ENCODE measurements at regions of chr17 and their contacts with region 1.

Region 1: DNA sequence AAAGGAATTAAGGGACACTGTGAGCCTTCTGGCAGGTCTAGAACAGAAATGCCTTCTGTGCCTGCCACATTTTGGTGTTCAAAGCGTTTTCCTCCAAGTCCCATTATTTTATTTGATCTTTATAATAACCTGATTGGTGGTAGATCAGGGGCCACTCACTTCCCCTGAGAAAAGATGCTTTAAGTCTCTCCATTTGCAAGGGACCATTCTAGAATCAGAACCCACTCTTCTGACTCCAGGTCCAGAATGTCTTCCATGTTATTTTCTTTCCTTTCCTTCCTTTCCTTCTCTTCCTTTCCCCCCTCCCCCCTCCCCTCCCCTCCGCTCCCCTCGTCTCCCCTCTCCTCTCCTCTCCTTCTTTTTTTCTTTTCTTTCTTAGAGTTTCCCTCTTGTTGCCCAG is 19.3 kb upstream of the CDC42EP4 start:
- DNase-seq: no peak
- H3K4me3 ChIP-seq: no peak overlapping the region
- H3K27ac ChIP-seq: no peak overlapping the region
- H3K4me1 ChIP-seq: peaks cover 5 to 8% of the 10 kb centered on the region in 2 donors
- H3K27me3 ChIP-seq: no peaks in the 10 kb centered on the region
- CTCF ChIP-seq: no peak
- POLR2A ChIP-seq: no peak

Region 2: DNA sequence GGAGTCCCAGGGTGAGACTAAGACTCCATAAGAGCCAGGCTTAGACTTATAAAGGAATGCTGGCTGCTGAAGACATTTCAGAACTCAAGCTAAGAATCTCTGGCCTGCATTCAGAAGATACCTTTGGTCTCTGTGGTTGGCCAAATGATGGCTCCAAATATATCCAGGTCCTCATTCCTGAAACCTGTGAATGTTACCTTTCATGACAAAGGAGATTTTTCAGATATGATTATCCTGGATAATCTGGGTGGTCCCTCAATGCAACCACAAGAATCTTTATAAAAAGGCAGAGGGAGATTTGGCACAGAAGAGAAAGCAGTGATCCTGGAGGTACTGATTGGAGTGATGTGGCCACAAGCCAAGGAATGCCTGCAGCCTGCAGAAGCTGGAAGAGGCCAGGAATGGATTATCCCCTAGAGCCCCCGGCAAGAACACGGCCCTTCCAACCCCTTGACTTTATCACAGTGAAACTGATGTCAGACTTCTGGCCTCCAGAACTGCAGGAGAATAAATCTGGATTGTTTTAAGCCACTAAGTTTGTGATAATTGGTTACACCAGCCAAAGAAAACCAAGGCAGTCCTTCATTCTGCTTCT is 491.8 kb before region 1 on chr17:
- intact Hi-C with region 1: no loop called
- DNase-seq: no peak
- H3K4me3 ChIP-seq: no peak overlapping the region
- H3K27ac ChIP-seq: no peak overlapping the region
- H3K4me1 ChIP-seq: no peaks in the 10 kb centered on the region
- H3K27me3 ChIP-seq: no peaks in the 10 kb centered on the region
- CTCF ChIP-seq: no peak
- POLR2A ChIP-seq: no peak

Region 3: DNA sequence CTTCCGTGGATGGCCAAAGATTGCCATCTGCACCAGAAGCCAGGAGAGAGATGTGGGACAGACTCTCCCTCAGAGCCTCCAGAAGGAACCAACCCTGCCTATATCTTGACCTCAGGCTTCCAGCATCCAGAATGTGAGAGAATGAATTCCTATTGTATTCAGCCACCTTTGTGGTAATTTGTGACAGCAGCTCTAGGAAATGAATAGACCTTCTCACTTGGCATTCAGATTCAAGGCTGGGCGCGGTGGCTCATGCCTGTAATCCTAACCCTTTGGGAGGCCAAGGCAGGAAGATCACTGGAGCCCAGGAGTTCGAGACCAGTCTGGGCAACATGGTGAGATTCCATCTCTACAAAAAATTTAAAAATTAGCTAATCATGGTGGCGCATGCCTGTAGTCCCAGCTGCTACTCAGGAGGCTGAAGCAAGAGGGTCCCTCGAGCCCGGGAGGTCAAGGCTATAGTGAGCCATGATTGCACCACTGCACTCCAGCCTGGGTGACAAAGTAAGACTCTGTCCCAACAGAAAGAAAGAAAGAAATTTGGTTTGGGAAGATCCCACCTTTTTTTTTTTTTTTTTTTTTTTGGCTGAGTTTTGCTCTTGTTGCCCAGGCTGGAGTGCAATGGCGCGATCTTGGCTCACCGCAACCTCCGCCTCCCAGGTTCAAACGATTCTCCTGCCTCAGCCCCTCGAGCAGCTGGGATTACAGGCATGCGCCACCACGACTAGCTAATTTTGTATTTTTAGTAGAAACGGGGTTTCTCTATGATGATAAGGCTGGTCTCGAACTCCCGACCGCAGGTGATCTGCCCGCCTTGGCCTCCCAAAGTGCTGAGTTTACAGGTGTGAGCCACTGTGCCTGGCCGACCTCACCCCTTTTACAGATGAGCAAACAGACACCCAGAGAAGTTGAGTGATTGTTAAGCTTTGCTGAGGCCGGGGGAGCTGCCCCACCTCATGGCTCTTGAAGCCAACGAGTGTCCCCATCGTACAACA is 65.1 kb before region 1 on chr17:
- intact Hi-C with region 1: loop called (anchors 2 kb)
- DNase-seq: peak in 1 of 2 donors; percentile 60
- H3K4me3 ChIP-seq: no peak overlapping the region
- H3K27ac ChIP-seq: no peak overlapping the region
- H3K4me1 ChIP-seq: peaks cover 0 to 4% of the 10 kb centered on the region in 2 donors
- H3K27me3 ChIP-seq: no peaks in the 10 kb centered on the region
- CTCF ChIP-seq: no peak
- POLR2A ChIP-seq: no peak